ENCODE measurements at regions of chr4 and their contacts with region 1.

Region 1: DNA sequence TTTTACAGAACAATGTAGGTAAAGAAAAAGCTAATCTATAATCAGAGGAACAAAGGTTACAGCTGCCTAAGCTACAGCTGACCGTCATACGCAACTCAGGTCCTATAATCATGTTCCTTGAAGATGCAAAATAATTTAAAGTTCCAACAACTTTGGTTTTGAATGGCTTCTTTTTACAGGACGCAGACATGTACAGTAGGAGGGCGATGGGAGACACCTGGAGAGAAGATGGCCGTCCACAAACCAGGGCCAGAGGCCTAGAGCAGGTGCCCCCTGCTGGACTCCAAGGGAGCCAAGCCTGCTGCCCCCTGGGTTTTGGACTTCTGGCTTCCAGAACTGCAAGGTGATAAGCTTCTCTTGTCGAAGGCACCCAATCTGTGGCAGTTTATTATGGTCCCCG is 10.6 kb downstream of the HGFAC start:
- DNase-seq: no peak
- ATAC-seq: no peak
- H3K4me3 Mint-ChIP-seq: no peak overlapping the region
- H3K27ac Mint-ChIP-seq: no peak overlapping the region
- H3K4me1 Mint-ChIP-seq: no peaks in the 10 kb centered on the region
- H3K27me3 Mint-ChIP-seq: peaks cover 8% of the 10 kb centered on the region
- CTCF ChIP-seq: no peak

Region 2: GRCh38 chr4:3355266-3355748 is 97.1 kb before region 1 on chr4:
- CTCF ChIA-PET with region 1: no interaction called
- POLR2A ChIA-PET with region 1: interaction called, 11 read pairs
- intact Hi-C with region 1: no loop called
- DNase-seq: no peak
- ATAC-seq: peak; percentile 89
- H3K4me3 Mint-ChIP-seq: peak overlapping the region; percentile 67
- H3K27ac Mint-ChIP-seq: peak overlapping the region; percentile 91
- H3K4me1 Mint-ChIP-seq: peaks cover 44% of the 10 kb centered on the region
- H3K27me3 Mint-ChIP-seq: no peaks in the 10 kb centered on the region
- CTCF ChIP-seq: no peak

Region 3: DNA sequence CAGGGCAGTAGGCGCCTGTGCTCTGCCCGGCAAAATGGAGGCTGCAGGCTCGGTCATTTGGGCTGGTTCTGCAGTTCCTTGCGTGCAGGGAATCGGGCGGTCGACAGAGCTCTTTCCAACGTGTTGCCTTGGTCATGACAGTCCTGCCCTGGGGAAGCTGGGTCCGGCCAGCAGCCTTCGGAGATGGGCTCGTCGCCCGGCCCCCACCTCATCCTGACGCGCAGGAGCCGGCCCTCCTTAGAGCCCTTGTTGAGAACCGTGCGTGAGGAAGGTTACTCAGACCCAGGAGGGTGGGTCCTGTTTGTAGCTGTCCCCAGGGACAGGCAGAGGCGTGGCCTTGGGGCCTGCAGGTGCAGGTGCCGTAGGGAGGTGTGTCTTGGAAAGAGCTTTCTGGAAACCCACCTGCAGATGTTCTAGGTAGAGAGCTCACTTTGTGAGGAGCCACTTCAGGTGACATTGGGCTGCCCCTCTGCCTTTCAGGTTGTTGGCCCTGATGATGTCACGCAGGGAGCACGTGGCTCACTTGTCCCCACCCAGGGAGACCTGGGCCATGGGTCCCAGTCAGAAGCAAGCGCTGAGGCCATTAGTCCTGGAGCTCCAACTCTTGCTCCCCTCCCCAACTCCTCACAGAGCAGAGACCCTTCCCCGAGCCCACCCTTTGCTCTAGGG is 25.8 kb before region 1 on chr4:
- CTCF ChIA-PET with region 1: no interaction called
- POLR2A ChIA-PET with region 1: no interaction called
- intact Hi-C with region 1: no loop called
- DNase-seq: no peak
- ATAC-seq: no peak
- H3K4me3 Mint-ChIP-seq: no peak overlapping the region
- H3K27ac Mint-ChIP-seq: no peak overlapping the region
- H3K4me1 Mint-ChIP-seq: peaks cover 5% of the 10 kb centered on the region
- H3K27me3 Mint-ChIP-seq: no peaks in the 10 kb centered on the region
- CTCF ChIP-seq: no peak

Region 4: DNA sequence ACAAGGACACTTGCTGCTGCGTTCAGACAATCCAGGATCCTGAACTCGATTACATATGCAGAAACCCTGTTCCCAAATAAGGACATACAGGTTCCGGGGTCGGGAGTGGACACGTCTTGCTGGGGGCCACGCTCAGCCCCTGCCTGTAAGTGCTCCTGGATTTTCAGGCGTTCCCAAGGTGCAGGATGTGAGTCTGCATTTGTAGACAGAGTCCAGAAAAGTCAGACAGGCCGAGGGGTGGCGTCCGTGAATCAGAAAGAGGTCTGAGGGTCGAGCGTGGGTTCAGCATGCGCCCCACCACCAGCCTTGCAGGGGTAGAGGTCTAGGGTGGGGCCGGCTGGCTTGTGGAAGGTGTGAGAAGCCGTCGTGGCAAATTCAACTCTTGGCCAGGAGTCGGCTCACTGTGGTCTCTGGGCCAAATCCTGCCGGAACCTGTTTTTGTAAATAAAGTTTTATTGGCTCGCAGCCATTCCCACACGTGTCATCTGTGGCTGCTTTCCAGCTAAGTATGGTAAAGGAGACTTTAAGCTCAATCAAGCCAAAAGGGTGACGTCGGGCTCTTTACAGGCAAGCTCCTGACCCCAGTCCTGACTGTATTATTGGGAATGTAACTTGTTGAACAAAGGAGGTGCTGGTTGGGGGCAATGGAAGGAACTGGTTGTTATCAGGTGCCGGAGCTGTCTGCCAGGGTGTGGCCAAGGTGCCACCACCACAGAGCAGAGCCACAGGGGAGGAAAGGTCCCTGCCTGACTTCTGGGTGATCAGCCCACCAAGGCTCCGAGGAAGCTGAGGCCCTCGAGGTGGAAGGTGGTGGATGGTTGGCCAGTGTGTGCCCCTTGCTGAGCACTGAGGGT is 18.1 kb after region 1 on chr4:
- CTCF ChIA-PET with region 1: no interaction called
- POLR2A ChIA-PET with region 1: no interaction called
- intact Hi-C with region 1: no loop called
- DNase-seq: no peak
- ATAC-seq: no peak
- H3K4me3 Mint-ChIP-seq: no peak overlapping the region
- H3K27ac Mint-ChIP-seq: no peak overlapping the region
- H3K4me1 Mint-ChIP-seq: no peaks in the 10 kb centered on the region
- H3K27me3 Mint-ChIP-seq: peaks cover 6% of the 10 kb centered on the region
- CTCF ChIP-seq: no peak

Region 5: GRCh38 chr4:3624523-3624922 is 172.1 kb after region 1 on chr4:
- CTCF ChIA-PET with region 1: no interaction called
- POLR2A ChIA-PET with region 1: no interaction called
- intact Hi-C with region 1: no loop called
- DNase-seq: no peak
- ATAC-seq: no peak
- H3K4me3 Mint-ChIP-seq: no peak overlapping the region
- H3K27ac Mint-ChIP-seq: no peak overlapping the region
- H3K4me1 Mint-ChIP-seq: peaks cover 3% of the 10 kb centered on the region
- H3K27me3 Mint-ChIP-seq: peaks cover 21% of the 10 kb centered on the region
- CTCF ChIP-seq: no peak

Measured in activated B cell treated with CpG ODN at 0.5 μM for 24 hours (primary cell).